Breast epithelium (tissue), 4 donors: ENCODE measurements at regions of chr17 and their contacts with region 1.

Region 1: DNA sequence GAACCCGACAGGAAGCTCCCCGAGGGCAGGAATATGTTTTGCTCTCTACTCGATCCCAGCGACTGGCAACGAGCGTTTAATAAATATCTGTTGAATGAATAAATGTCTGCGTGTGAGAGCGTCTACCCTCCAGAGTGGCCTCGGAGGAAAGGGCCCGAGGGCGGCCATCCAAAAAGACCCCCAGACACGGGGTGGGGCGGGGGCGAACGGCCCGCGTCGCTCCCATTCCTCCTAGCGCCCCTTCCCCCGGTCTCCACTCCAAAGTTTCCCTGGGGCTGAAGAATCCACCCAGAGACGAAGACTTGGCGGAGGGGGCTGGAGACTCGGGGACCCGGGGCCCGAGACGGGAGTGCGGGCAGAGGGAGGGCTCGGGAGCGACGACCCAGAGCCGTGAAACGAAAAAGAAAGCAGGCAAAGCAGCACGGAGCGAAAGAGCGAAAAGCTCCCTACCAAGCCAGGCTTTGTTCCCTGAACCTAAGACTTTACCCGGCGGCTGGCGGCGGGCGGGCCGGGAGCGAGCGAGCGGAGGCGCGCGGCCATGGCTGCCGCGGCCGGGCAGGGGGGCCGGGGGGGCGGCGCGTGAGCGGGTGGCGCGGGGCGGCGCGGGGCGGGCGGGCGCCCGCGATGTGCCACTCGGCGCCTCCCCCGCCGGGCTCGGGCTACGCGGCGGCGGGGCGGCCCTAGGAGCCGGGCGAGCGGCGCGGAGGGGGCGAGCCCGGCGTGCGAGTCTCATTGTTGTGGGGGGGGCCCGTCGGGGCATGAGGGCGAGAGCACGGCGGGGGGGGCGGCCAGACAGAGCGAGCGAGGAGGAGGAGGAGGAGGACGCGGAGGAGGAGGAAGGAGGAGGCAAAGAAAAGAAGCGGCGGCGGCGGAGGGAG is at the start of gene MLLT6:
- DNase-seq: peak; percentile 76 to 78
- H3K4me3 ChIP-seq: peak within 1 kb of the TSS; percentile 81 to 98 (median 92)
- H3K27ac ChIP-seq: peak within 1 kb of the TSS; percentile 96 to 98
- H3K4me1 ChIP-seq: peaks cover 3 to 4% of the 10 kb centered on the region in 2 donors
- H3K27me3 ChIP-seq: no peaks in the 10 kb centered on the region
- CTCF ChIP-seq: no peak
- POLR2A ChIP-seq: no peak
- total RNA-seq, gene MLLT6: 41.9 to 101 (median 90.5) TPM

Region 2: DNA sequence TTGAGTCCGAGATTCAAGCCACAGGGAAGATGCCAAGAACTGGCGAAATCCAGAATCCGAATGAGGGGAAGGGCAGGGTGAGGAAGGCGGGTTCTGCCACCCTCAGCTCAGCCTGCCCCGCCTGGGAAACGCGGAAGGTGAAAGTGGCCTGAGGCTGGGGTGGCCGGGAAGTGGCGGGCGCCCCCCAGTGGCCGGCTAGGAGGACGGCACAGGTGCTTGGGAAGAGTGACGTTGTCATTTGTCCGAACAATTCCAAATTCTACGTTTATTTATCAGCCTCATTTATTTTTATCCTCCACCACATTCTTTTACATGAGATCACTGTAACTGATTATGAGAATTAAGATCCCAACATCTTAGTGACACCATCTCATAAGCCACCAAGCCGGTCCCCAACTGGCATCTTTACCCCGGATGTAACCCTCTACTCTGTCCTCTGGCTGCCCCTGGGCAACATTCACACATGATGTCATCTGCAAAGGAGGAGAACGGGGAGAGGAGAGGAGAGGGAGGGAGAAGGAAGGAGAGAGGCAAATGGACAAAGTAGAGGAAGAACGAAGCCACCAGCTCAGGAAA is 120.4 kb before region 1 on chr17:
- intact Hi-C with region 1: no loop called
- DNase-seq: peak; percentile 85 to 91
- H3K4me3 ChIP-seq: peak overlapping the region in 2 of 3 donors; percentile 2 to 35
- H3K27ac ChIP-seq: peak overlapping the region; percentile 89 to 90
- H3K4me1 ChIP-seq: peaks cover 0 to 9% of the 10 kb centered on the region in 2 donors
- H3K27me3 ChIP-seq: no peaks in the 10 kb centered on the region
- CTCF ChIP-seq: peak; percentile 96 to 98 (median 96)
- POLR2A ChIP-seq: no peak

Region 3: DNA sequence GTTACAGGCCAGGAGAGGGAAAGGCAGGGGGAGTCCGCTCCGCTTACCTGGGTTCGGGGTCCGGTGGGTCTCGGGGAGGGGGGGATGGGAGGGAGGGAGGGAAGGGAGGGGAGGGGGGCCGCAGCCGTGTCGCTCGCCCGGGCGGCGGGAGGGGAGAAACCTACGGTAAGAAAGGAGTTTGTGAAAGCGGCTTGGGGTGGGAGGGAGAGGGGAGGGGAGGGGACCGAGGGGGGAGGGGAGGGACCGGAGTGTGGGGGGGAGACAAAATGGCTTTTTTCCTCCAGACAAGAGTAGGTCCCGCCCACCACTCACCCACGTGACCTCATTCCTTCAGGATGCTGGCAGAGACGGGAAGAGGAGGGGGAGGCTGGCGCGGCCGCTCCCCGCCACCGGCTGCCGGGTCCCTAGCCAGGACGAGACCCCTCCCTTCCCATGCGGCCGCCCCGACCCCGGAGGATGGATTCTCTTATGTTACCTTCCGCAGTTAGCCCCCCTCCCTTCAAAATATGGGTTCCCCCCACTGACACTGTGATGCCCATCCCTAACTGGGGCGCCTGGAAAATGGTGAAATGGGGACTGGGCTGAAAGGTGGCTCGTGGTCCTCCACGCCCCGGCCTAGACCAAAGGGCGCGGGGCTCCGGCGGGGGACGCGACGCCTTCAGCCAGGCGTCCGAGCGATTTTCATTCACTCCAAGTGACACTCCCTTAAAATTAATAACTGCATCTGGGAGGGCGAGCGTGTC is 43.4 kb after region 1 on chr17 and contains the start of gene PCGF2:
- intact Hi-C with region 1: loop called (anchors 1 kb)
- DNase-seq: peak; percentile 87 to 91
- H3K4me3 ChIP-seq: peak within 1 kb of the TSS; percentile 84 to 91 (median 88)
- H3K27ac ChIP-seq: peak within 1 kb of the TSS; percentile 78 to 93
- H3K4me1 ChIP-seq: peaks cover 4 to 14% of the 10 kb centered on the region in 2 donors
- H3K27me3 ChIP-seq: no peaks in the 10 kb centered on the region
- CTCF ChIP-seq: no peak
- POLR2A ChIP-seq: peak; percentile 44
- total RNA-seq, gene PCGF2: 6.4 to 9.5 (median 9.3) TPM